Posterior vena cava (tissue), 2 donors: ENCODE measurements at regions of chr13 and their contacts with region 1.

Region 1: GRCh38 chr13:87524775-87525174 is 146.4 kb upstream of the SLITRK5 start:
- DNase-seq: no peak

Region 2: GRCh38 chr13:87331163-87331562 is 193.6 kb before region 1 on chr13:
- intact Hi-C with region 1: no loop called
- DNase-seq: no peak

Region 3: GRCh38 chr13:87426742-87427141 is 98.0 kb before region 1 on chr13:
- intact Hi-C with region 1: no loop called
- DNase-seq: no peak

Region 4: GRCh38 chr13:87538366-87539052 is 13.7 kb after region 1 on chr13:
- intact Hi-C with region 1: no loop called
- DNase-seq: no peak

Region 5: DNA sequence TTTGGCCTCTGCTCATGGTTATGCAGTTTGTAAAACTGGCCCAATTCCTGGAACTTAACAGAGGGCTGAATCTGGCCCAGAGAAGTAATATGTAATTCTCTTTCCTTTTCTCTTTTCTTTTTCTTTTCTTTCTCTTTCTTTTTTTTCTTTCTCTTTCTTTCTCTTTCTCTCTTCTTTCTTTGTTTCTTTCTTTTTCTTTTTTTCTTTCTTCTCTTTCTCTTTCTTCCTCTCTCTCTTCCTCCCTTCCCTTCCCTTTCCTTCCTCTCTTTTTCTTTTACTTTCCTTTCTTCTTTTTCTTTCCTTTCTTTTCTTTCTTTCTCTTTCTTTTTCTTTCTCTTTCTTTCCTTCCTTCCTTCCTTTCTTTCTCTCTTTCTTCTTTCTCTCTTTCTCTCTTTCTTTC is 57.6 kb after region 1 on chr13:
- intact Hi-C with region 1: loop called in 1 of 2 experiments (anchors 2 kb)
- DNase-seq: no peak